Heart right ventricle (tissue), 16 donors: ENCODE measurements at regions of chr7 and their contacts with region 1.

Region 1: DNA sequence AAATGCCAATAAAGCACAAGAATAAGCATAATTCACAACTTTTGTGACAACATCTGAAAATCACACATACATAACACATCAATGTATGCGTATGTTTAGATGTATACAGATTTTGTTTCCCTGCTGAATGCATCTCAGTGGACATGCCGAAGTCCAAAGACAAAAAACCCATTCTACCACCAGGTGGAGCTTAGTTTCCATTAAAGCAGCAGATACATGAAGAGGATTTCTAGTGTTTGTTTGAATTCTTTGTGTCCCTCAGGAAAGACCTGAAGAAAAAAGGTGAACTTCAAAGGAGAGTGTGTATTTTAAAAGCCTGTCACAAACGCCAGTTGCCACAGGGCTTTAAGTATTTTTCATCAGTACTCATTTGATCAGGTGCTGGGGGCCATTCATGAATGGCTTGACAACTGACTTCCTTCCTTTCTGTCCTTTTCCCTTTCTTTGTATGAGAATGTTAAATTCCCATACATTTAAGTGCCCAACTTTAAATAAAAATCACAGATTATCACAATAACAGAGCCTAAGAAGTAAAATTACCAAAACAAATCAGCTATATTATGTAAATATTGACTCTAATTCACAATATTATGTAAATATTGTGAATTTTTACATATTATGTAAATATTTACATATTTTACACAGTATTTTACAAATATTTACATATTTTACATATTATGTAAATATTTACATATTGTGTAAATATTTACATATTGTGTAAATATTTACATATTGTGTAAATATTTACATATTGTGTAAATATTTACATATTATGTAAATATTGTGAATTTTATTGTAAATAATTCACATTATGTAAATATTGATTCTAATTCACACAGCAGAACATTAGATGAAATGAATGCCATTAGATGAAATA is 343.0 kb downstream of the CRPPA start:
- DNase-seq: peak in 1 of 2 donors; percentile 48
- ATAC-seq: peak in 6 of 8 donors; percentile 56 to 79 (median 64)
- H3K4me3 ChIP-seq: no peak overlapping the region
- H3K27ac ChIP-seq: no peak overlapping the region
- H3K4me1 ChIP-seq: peaks cover 0 to 4% (median 0%) of the 10 kb centered on the region in 9 donors
- H3K27me3 ChIP-seq: no peaks in the 10 kb centered on the region
- CTCF ChIP-seq: peak; percentile 39 to 85 (median 72)

Region 2: GRCh38 chr7:16098585-16099179 is 20.4 kb after region 1 on chr7:
- intact Hi-C with region 1: loop called in 1 of 10 experiments (anchors 2 kb)
- DNase-seq: peak in 1 of 2 donors; percentile 24
- ATAC-seq: peak in 3 of 8 donors; percentile 25 to 52 (median 37)
- H3K4me3 ChIP-seq: no peak overlapping the region
- H3K27ac ChIP-seq: peak overlapping the region in 3 of 10 donors; percentile 27 to 50 (median 40)
- H3K4me1 ChIP-seq: peaks cover 0 to 33% (median 12%) of the 10 kb centered on the region in 9 donors
- H3K27me3 ChIP-seq: no peaks in the 10 kb centered on the region
- CTCF ChIP-seq: peak; percentile 71 to 92 (median 85)

Region 3: GRCh38 chr7:16135658-16136057 is 57.3 kb after region 1 on chr7:
- intact Hi-C with region 1: no loop called
- DNase-seq: no peak
- ATAC-seq: no peak
- H3K4me3 ChIP-seq: no peak overlapping the region
- H3K27ac ChIP-seq: no peak overlapping the region
- H3K4me1 ChIP-seq: peaks cover 0 to 11% (median 7%) of the 10 kb centered on the region in 9 donors
- H3K27me3 ChIP-seq: no peaks in the 10 kb centered on the region
- CTCF ChIP-seq: no peak